ENCODE measurements at regions of chr22 and their contacts with region 1.

Region 1: DNA sequence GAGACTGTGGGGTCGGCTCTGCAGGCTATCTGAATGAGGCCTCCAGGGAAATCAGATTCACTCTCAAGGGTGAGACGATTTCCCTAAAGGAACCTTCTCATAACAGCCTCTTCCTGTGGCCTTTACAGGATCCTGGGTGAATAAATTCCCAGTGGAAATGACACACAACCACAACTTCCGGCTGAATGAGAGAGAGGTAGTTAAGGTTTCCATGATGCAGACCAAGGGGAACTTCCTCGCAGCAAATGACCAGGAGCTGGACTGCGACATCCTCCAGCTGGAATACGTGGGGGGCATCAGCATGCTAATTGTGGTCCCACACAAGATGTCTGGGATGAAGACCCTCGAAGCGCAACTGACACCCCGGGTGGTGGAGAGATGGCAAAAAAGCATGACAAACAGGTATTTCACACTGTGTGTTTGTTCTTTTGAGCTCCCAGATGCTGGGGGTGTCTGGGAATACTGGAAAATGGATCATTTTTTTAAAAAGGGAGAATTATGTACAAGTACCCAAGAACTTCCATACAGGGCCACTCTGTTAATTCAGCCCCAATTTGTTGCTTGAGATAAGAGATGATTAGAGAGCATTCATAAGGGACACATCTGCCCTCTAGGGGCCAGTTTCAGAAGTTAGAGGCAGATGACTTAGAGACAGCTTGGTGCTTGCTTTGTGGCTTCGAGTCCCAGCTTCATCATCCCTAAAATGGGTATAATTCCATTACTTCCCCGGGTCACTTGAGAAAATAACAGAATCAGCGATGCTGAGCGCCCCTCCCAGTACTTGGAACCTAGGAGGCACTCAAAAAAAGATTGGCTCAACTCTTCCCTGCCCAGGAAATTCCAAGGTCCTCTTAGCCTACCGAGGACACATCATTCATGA is 10.2 kb downstream of the SERPIND1 start:
- DNase-seq: no peak
- ATAC-seq: peak; percentile 85
- H3K4me3 Mint-ChIP-seq: peak overlapping the region; percentile 32
- H3K27ac Mint-ChIP-seq: peak overlapping the region; percentile 30
- H3K4me1 Mint-ChIP-seq: peaks cover 16% of the 10 kb centered on the region
- H3K27me3 Mint-ChIP-seq: no peaks in the 10 kb centered on the region
- CTCF ChIP-seq: no peak

Region 2: GRCh38 chr22:20418211-20418788 is 365.8 kb before region 1 on chr22:
- CTCF ChIA-PET with region 1: no interaction called
- POLR2A ChIA-PET with region 1: no interaction called
- intact Hi-C with region 1: loop called (anchors 2 kb)
- DNase-seq: peak; percentile 66
- ATAC-seq: peak; percentile 90
- H3K4me3 Mint-ChIP-seq: peak overlapping the region; percentile 68
- H3K27ac Mint-ChIP-seq: no peak overlapping the region
- H3K4me1 Mint-ChIP-seq: peaks cover 4% of the 10 kb centered on the region
- H3K27me3 Mint-ChIP-seq: peaks cover 3% of the 10 kb centered on the region
- CTCF ChIP-seq: no peak

Region 3: DNA sequence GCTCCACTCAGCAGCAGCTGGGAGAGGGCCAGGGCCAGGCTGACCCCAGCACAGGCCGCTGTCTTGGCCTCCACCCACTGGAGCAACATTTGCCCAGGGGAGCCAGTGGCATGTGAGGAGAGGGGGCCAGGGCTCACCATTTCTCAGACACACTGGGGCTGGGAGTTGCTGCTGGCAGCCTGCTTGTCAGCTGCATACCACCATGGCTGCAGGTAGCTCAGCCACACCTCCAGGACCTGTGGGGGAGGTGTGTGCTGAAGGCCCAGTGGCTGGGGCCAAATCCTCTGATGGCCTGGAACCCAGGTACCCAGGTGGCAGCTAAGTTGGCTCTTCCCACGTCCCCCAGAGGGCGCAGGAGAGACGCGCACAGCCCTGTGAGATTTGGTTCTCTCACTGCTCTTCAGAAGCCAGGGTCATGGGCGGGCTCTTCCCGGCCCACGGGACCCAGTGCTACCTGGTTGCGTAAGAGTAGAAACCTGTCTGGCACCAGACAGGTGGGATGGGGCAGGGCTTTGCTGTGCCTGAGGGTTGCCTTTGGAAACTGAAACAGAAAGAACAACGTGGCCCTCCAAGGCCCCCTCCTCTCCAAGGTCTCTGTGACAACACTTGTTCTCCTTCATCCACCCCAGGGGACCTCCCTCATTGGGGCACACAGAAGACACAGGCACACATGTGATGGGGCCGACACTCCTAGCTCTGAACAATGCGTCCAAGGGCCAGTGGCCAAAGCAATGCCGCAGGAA is 177.9 kb before region 1 on chr22:
- CTCF ChIA-PET with region 1: interaction called, 3 read pairs
- POLR2A ChIA-PET with region 1: no interaction called
- intact Hi-C with region 1: loop called (anchors 1 kb)
- DNase-seq: peak; percentile 41
- ATAC-seq: peak; percentile 92
- H3K4me3 Mint-ChIP-seq: no peak overlapping the region
- H3K27ac Mint-ChIP-seq: no peak overlapping the region
- H3K4me1 Mint-ChIP-seq: peaks cover 4% of the 10 kb centered on the region
- H3K27me3 Mint-ChIP-seq: no peaks in the 10 kb centered on the region
- CTCF ChIP-seq: no peak

Region 4: GRCh38 chr22:20741634-20742581 is 42.2 kb before region 1 on chr22:
- CTCF ChIA-PET with region 1: interaction called, 11 read pairs
- POLR2A ChIA-PET with region 1: no interaction called
- intact Hi-C with region 1: no loop called
- DNase-seq: no peak
- ATAC-seq: peak; percentile 40
- H3K4me3 Mint-ChIP-seq: no peak overlapping the region
- H3K27ac Mint-ChIP-seq: no peak overlapping the region
- H3K4me1 Mint-ChIP-seq: peaks cover 14% of the 10 kb centered on the region
- H3K27me3 Mint-ChIP-seq: no peaks in the 10 kb centered on the region
- CTCF ChIP-seq: no peak

Region 5: GRCh38 chr22:20748731-20749428 is 35.2 kb before region 1 on chr22:
- CTCF ChIA-PET with region 1: interaction called, 9 read pairs
- POLR2A ChIA-PET with region 1: no interaction called
- intact Hi-C with region 1: loop called (anchors 2 kb)
- DNase-seq: no peak
- ATAC-seq: peak; percentile 80
- H3K4me3 Mint-ChIP-seq: peak overlapping the region; percentile 62
- H3K27ac Mint-ChIP-seq: peak overlapping the region; percentile 73
- H3K4me1 Mint-ChIP-seq: peaks cover 52% of the 10 kb centered on the region
- H3K27me3 Mint-ChIP-seq: no peaks in the 10 kb centered on the region
- CTCF ChIP-seq: no peak

Region 6: GRCh38 chr22:20807315-20807752 is 23.2 kb after region 1 on chr22:
- CTCF ChIA-PET with region 1: no interaction called
- POLR2A ChIA-PET with region 1: no interaction called
- intact Hi-C with region 1: no loop called
- DNase-seq: no peak
- ATAC-seq: no peak
- H3K4me3 Mint-ChIP-seq: no peak overlapping the region
- H3K27ac Mint-ChIP-seq: no peak overlapping the region
- H3K4me1 Mint-ChIP-seq: peaks cover 10% of the 10 kb centered on the region
- H3K27me3 Mint-ChIP-seq: no peaks in the 10 kb centered on the region
- CTCF ChIP-seq: no peak

Measured in activated B cell treated with CpG ODN at 0.5 μM for 24 hours (primary cell).